Activated CD4-positive, alpha-beta T cell treated with anti-CD3 and anti-CD28 coated beads, Interleukin-2, amount 10 ng/mL, durations not matched to agents 24 days and 14 days (primary cell): ENCODE measurements at regions of chr10 and their contacts with region 1.

Region 1: GRCh38 chr10:22436884-22437619 is 91.8 kb downstream of the SPAG6 start:
- DNase-seq: peak; percentile 94
- H3K4me3 Mint-ChIP-seq: peak overlapping the region; percentile 93
- H3K27ac Mint-ChIP-seq: peak overlapping the region; percentile 98
- H3K4me1 Mint-ChIP-seq: peaks cover 47% of the 10 kb centered on the region
- H3K27me3 Mint-ChIP-seq: peaks cover 12% of the 10 kb centered on the region

Region 2: DNA sequence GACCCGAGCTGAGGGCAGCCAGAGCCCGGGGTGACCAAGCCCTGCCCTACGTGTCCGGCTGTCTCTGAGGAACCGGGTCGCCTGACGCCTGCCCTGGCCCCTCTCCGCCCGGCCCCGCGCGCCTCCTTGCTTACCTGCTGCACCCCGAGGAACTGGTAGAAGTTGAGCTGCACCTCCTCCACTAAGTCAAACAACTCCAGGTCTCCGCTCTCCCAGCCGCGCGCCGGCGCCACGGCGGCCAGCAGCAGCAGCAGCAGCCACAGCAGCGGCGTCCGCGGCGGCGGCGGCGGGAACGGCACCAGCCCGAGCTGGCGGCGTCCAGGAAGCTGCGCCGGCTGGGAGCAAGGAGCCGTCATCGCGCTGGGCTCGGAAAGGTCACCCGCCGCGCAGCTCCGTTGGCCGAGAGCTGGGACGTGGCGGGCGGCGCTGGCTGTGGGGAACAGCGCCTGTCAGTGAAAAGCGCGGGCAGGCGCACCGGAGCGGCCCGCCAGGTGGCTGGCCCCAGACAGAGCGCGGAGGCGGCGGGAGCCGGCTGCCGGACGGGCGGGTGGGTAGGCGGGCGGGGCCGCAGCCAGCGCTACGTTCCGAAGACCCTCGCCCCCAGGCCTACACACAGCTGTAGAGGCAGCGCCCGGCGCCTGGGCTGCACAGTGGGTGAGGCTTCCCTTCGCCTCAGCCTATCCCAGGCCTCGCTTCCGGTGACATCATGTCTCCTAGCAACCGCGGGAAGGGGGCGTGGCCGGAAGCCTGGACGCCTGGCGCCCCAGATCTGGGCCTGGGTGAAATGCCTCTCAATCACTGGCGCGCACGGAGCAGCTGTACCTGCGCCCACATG is 433.8 kb before region 1 on chr10 and contains the start of gene DNAJC1:
- intact Hi-C with region 1: loop called (anchors 1 kb)
- DNase-seq: peak; percentile 100
- H3K4me3 Mint-ChIP-seq: peak within 1 kb of the TSS; percentile 93
- H3K27ac Mint-ChIP-seq: peak within 1 kb of the TSS; percentile 96
- H3K4me1 Mint-ChIP-seq: peaks cover 26% of the 10 kb centered on the region
- H3K27me3 Mint-ChIP-seq: peaks cover 18% of the 10 kb centered on the region
- total RNA-seq, gene DNAJC1: 22.1 and 22.4 TPM in 2 replicates

Region 3: GRCh38 chr10:22259280-22259679 is 177.8 kb before region 1 on chr10:
- intact Hi-C with region 1: no loop called
- DNase-seq: peak; percentile 63
- H3K4me3 Mint-ChIP-seq: no peak overlapping the region
- H3K27ac Mint-ChIP-seq: no peak overlapping the region
- H3K4me1 Mint-ChIP-seq: peaks cover 3% of the 10 kb centered on the region
- H3K27me3 Mint-ChIP-seq: peaks cover 29% of the 10 kb centered on the region

Region 4: DNA sequence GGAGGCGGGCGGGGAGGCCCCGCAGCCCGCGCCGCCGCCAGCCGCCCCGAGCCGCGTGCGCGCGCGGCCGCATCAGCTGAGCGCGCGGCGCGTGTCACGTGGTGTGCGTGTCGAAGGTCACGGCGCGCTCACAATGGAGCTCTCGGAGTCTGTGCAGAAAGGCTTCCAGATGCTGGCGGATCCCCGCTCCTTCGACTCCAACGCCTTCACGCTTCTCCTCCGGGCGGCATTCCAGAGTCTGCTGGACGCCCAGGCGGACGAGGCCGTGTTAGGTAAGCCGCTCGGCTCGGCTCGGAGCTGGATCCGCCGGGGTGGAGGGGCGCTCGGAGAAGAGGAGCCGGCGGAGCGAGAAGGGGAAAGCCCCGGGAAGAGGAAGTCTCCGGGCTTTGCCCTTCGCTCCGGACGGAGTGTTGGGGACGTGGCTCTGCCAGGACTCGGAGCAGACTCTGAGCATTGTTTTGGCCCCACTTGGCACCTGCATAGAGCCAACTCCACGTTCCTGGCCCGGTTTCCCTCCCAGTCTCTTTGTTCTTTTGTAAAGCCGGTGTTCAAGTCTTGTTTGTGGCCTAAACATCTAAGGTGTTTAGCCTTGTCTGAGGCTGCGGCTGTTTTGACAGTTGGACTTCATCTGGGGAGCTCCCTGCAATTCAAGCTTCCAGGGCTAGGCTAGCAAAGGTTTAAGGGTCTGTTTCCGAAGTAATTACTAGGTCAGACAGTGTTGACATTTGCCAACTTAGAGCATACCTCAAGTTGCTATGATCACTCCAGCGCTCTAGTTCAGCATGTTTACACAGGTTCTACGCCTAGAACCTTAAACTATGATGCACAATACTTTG is 120.5 kb before region 1 on chr10 and contains the start of gene COMMD3:
- intact Hi-C with region 1: loop called (anchors 5 kb)
- DNase-seq: peak; percentile 95
- H3K4me3 Mint-ChIP-seq: peak within 1 kb of the TSS; percentile 87
- H3K27ac Mint-ChIP-seq: peak within 1 kb of the TSS; percentile 94
- H3K4me1 Mint-ChIP-seq: peaks cover 29% of the 10 kb centered on the region
- H3K27me3 Mint-ChIP-seq: no peaks in the 10 kb centered on the region
- total RNA-seq, gene COMMD3: 76.7 and 79.7 TPM in 2 replicates

Region 5: DNA sequence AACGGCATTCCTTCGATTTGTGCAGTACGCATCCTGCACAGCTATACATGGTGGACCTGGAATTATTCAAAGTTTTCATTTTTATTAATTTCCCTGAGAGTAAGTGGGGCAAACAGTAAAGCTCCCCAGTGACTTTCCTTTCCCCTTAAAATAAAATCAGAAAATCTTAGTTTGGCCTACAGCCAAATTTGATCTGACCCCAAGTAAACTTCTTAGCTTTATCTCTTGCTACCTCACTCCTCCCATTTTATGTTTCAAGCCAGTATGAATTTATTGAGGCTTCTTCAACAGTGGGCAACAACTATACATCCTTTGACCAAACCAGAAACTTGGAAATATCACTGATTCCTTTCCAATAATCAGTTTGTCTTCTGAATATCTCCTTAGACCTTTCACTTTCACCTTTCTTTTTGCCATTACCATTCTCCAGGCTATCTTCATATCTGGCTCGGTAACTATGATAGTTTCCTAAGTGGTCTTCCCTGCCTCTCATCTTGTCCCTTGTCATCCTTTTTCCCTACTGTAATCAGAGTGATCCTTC is 80.6 kb before region 1 on chr10:
- intact Hi-C with region 1: no loop called
- DNase-seq: no peak
- H3K4me3 Mint-ChIP-seq: no peak overlapping the region
- H3K27ac Mint-ChIP-seq: no peak overlapping the region
- H3K4me1 Mint-ChIP-seq: no peaks in the 10 kb centered on the region
- H3K27me3 Mint-ChIP-seq: peaks cover 18% of the 10 kb centered on the region

Region 6: DNA sequence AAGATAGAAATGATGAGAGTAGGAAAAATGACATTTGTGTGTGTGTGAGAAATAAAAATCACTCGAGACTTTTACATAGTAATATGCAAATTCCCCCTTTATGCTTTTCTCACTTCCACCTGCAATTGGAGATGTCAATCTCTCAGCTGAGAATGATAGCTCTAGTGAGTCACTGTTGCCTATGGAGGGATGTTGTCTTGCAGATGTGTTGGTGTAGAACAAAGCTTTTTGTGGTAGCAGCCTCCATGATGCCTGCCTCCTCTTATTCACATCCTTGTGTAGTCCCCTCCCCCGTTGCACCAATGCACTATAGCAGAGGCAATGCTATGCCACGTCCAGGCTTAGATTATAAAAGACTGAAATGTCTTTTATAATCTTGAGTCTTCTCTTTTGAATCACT is 58.0 kb before region 1 on chr10:
- intact Hi-C with region 1: loop called (anchors 2 kb)
- DNase-seq: peak; percentile 74
- H3K4me3 Mint-ChIP-seq: peak overlapping the region; percentile 10
- H3K27ac Mint-ChIP-seq: peak overlapping the region; percentile 74
- H3K4me1 Mint-ChIP-seq: peaks cover 17% of the 10 kb centered on the region
- H3K27me3 Mint-ChIP-seq: peaks cover 4% of the 10 kb centered on the region

Region 7: GRCh38 chr10:22655311-22655981 is 218.4 kb after region 1 on chr10:
- intact Hi-C with region 1: loop called (anchors 10 kb)
- DNase-seq: peak; percentile 80
- H3K4me3 Mint-ChIP-seq: peak overlapping the region; percentile 64
- H3K27ac Mint-ChIP-seq: peak overlapping the region; percentile 90
- H3K4me1 Mint-ChIP-seq: peaks cover 88% of the 10 kb centered on the region
- H3K27me3 Mint-ChIP-seq: no peaks in the 10 kb centered on the region

Region 8: GRCh38 chr10:22670788-22671187 is 233.7 kb after region 1 on chr10:
- intact Hi-C with region 1: no loop called
- DNase-seq: no peak
- H3K4me3 Mint-ChIP-seq: no peak overlapping the region
- H3K27ac Mint-ChIP-seq: no peak overlapping the region
- H3K4me1 Mint-ChIP-seq: peaks cover 58% of the 10 kb centered on the region
- H3K27me3 Mint-ChIP-seq: no peaks in the 10 kb centered on the region